PC-9 (cell line): ENCODE measurements at regions of chr2 and their contacts with region 1.

Region 1: GRCh38 chr2:64988420-64989125 is 626 bp upstream of the SLC1A4 start:
- DNase-seq: peak; percentile 47 to 76
- H3K4me3 ChIP-seq: peak overlapping the region; percentile 93
- H3K27ac ChIP-seq: peak overlapping the region; percentile 83
- H3K4me1 ChIP-seq: peaks cover 29% of the 10 kb centered on the region
- H3K27me3 ChIP-seq: no peaks in the 10 kb centered on the region
- CTCF ChIP-seq: peak; percentile 55; the same call in 1 of the 2 replicates

Region 2: DNA sequence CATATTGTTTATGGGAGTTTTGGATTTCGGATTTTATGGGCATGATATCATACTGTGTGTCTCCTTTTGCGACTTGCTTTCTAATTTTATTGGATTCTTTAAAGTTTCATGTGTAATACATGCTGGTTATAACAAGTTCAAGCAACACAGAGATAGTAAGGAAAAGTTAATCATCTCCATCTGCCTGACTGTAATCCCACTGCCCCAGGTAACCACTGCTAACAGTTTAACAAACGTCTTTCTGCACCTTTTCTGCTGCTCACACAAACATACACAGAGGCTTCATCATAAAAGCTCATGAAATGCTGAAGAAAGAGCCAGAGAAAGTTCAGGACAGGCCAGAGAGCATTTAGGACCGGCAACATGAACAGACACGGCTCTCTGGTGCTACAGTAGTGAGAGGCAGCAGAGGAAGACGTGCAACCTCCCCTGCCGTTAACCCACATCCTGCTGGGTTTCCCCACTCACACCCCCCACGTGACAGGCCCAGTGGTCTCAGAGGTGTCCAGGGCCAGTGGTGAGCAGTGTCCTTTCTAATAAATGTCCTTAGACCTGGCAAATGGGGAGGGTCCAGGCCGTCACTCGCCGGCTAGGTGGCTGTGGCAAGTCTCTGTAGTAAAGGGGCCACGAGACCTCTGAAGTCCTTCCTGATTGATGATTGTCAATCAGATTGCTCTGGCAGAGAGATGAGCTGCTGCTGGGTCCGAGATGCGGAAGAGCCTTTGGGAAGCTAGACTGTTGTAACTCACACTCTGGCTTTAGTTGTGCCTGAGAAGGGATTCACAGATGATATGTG is 42.4 kb before region 1 on chr2:
- CTCF ChIA-PET with region 1: no interaction called
- POLR2A ChIA-PET with region 1: no interaction called
- intact Hi-C with region 1: no loop called
- DNase-seq: no peak
- H3K4me3 ChIP-seq: no peak overlapping the region
- H3K27ac ChIP-seq: no peak overlapping the region
- H3K4me1 ChIP-seq: peaks cover 11% of the 10 kb centered on the region
- H3K27me3 ChIP-seq: no peaks in the 10 kb centered on the region
- CTCF ChIP-seq: no peak

Region 3: GRCh38 chr2:65003037-65003436 is 14.5 kb after region 1 on chr2:
- CTCF ChIA-PET with region 1: no interaction called
- POLR2A ChIA-PET with region 1: interaction called, 12 read pairs
- intact Hi-C with region 1: no loop called
- DNase-seq: no peak
- H3K4me3 ChIP-seq: no peak overlapping the region
- H3K27ac ChIP-seq: no peak overlapping the region
- H3K4me1 ChIP-seq: peaks cover 8% of the 10 kb centered on the region
- H3K27me3 ChIP-seq: no peaks in the 10 kb centered on the region
- CTCF ChIP-seq: no peak

Region 4: DNA sequence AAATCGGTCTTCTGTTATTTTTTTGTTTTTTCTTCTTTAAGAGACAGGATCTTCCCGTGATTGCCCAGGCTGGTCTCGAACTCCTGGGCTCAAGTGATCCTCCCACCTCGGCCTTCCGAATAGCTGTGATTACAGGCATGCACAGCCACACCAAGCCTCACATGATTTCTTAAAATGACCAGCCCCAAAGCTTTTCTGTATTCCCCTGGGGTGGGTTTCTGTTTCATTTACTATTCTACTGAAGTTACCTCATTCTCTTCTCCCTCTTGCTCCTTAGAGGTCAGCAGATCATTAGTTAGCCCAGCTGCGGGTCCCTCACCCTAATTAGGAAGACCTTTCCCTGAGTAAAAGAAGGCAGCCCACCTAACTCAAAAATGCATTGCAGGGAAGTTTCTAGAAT is 28.2 kb after region 1 on chr2:
- CTCF ChIA-PET with region 1: no interaction called
- POLR2A ChIA-PET with region 1: no interaction called
- intact Hi-C with region 1: no loop called
- DNase-seq: no peak
- H3K4me3 ChIP-seq: no peak overlapping the region
- H3K27ac ChIP-seq: no peak overlapping the region
- H3K4me1 ChIP-seq: no peaks in the 10 kb centered on the region
- H3K27me3 ChIP-seq: no peaks in the 10 kb centered on the region
- CTCF ChIP-seq: no peak

Region 5: GRCh38 chr2:65040400-65041261 is 52.1 kb after region 1 on chr2:
- CTCF ChIA-PET with region 1: no interaction called
- POLR2A ChIA-PET with region 1: no interaction called
- intact Hi-C with region 1: loop called (anchors 1 kb)
- DNase-seq: peak; percentile 58 to 76
- H3K4me3 ChIP-seq: no peak overlapping the region
- H3K27ac ChIP-seq: no peak overlapping the region
- H3K4me1 ChIP-seq: 0 out of 2 replicates have a peak, but pooled peaks cover 2% of the 10 kb centered on the region
- H3K27me3 ChIP-seq: no peaks in the 10 kb centered on the region
- CTCF ChIP-seq: peak; percentile 98

Region 6: GRCh38 chr2:65344689-65345088 is 356.1 kb after region 1 on chr2:
- CTCF ChIA-PET with region 1: no interaction called
- POLR2A ChIA-PET with region 1: interaction called, 11 read pairs
- intact Hi-C with region 1: no loop called
- DNase-seq: no peak
- H3K4me3 ChIP-seq: no peak overlapping the region
- H3K27ac ChIP-seq: no peak overlapping the region
- H3K4me1 ChIP-seq: no peaks in the 10 kb centered on the region
- H3K27me3 ChIP-seq: no peaks in the 10 kb centered on the region
- CTCF ChIP-seq: no peak